Activated CD4-positive, alpha-beta memory T cell treated with anti-CD3 and anti-CD28 coated beads, Interleukin-2, amount 10 ng/mL, durations not matched to agents 7 days and 5 days (primary cell): ENCODE measurements at regions of chr19 and their contacts with region 1.

Region 1: DNA sequence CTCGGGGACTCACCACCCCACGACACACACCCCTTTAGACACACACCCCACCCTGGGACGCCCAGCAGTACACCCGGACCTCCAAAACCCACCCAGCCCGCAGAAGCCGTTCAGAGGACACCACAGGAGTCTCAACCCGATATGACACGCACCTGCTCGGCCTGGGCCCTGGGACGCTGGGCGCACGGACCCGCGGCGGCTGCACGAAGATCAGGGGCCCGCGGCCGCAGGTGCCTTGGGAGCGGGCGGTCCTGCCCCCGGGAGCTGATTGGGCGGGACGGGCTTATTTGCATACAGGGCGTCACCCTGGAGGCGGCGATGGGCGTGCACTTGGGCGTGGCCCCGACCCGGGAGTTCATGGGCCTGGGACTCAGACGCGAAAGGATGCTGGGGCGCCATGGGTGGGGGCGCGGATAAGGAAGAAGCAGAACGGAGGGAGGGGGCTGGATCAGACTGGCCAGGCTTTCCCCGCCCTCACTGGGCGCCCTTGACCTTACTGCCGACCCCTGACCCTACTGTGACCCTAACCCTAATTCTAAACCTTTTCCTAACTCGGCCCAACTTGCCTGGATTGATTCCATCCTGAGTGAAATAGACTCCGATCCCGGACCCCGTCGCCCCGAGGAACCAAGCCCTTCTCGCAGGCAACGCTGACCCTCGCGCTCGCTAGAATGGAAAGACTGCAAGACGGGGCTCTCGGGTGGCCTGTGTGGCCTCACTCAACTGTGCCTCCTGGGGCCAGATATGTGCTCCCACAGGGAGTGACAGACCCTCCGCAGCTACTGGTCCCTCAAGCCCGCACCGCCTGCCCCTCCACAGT is at the start of gene MEF2B:
- DNase-seq: peak; percentile 78
- H3K4me3 Mint-ChIP-seq: no peak within 1 kb of the TSS
- H3K27ac Mint-ChIP-seq: no peak within 1 kb of the TSS
- H3K4me1 Mint-ChIP-seq: peaks cover 13% of the 10 kb centered on the region
- H3K27me3 Mint-ChIP-seq: peaks cover 3% of the 10 kb centered on the region
- total RNA-seq, gene MEF2B: 1.6 to 5.4 TPM

Region 2: GRCh38 chr19:19134687-19135158 is 35.5 kb before region 1 on chr19:
- CTCF ChIA-PET with region 1: no interaction called
- POLR2A ChIA-PET with region 1: no interaction called
- DNase-seq: no peak
- H3K4me3 Mint-ChIP-seq: no peak overlapping the region
- H3K27ac Mint-ChIP-seq: no peak overlapping the region
- H3K4me1 Mint-ChIP-seq: peaks cover 29% of the 10 kb centered on the region
- H3K27me3 Mint-ChIP-seq: no peaks in the 10 kb centered on the region

Region 3: DNA sequence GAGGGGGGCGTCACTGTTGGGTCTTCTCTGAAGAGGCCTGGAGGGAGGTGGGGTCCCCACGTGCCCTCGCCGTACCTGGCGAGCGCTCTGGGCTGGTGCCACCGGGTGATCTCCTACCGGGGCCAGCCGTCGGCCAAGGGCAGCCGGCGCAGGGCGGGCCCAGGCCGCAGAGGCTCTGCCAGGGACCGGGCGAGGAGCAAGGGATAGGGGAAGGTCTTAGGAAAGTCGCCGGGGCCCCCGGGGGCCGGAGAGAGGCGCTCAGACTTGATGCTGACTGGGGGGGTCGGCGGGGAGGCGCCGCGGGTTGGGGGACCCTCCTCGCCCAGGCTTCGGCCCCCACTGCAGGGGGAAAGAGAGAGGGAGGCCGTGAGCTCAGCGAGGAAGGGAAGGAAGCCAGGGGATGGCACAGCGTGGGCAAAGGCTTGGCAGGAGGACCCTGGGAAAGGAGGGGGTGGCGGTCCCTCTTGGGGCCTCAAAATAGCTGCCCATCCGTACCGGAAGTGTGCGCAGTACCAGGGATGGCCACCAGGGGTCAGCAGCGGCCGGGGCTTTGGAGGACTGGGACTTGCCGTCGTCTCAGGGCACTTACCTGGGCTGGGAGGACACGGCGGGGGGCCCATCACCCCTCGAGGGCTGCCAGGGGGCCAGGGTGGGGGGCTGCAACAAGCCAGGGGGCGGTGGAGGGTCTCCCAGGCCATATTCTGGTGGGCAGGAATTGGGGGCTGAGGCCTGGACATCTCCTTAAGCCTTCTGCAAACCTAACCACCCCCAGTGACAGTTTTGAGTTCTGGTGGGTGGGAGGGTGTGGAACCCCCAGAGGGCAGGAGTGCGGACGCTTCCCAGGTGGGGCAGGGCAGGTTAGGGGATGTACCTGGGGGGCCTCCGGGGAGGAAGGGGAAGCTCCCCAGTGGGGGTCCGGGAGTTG is 24.3 kb before region 1 on chr19:
- CTCF ChIA-PET with region 1: interaction called, 11 read pairs
- POLR2A ChIA-PET with region 1: interaction called, 3 read pairs
- DNase-seq: peak; percentile 89
- H3K4me3 Mint-ChIP-seq: no peak overlapping the region
- H3K27ac Mint-ChIP-seq: no peak overlapping the region
- H3K4me1 Mint-ChIP-seq: no peaks in the 10 kb centered on the region
- H3K27me3 Mint-ChIP-seq: no peaks in the 10 kb centered on the region

Region 4: DNA sequence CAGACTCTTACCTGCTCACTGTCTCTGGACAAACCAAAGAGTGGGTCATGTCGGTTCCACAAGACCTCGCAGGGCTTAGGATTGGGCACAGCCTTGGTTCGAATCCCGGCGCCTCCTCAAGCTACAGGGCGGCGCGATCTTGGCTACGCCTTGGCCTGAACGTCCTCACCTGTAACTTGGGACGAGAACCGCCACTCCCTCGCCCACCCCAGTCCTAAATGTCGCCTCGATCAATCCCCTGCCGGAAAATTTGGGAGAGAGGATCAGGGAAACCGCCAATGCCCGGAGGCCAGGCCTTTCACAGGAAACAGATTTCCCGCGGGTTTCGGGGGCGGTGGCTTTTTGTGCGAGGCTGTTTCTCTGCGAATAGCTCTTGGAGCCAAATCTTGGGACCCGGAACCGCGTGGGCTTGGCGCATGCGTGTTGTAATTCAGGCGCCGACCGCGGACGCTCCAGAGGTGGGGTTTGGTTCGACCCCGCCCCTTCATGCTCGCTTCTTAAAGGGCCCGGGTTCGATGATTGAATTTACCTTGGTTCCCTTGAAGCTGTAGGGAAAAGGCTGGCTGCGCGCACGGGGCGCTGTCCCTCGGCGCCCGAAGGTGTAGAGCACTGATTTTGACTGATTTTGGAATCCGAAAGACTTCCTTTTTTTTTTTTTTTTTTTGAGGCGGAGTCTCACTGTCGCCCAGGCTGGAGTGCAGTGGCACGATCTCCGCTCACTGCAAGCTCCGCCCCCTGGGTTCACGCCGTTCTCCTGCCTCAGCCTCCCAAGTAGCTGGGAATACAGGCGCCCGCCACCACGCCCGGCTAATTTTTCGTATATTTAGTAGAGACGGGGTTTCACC is 33.0 kb after region 1 on chr19 and contains the start of gene NR2C2AP:
- CTCF ChIA-PET with region 1: interaction called, 12 read pairs
- POLR2A ChIA-PET with region 1: no interaction called
- DNase-seq: peak; percentile 93
- H3K4me3 Mint-ChIP-seq: peak within 1 kb of the TSS; percentile 90
- H3K27ac Mint-ChIP-seq: peak within 1 kb of the TSS; percentile 86
- H3K4me1 Mint-ChIP-seq: peaks cover 57% of the 10 kb centered on the region
- H3K27me3 Mint-ChIP-seq: peaks cover 1% of the 10 kb centered on the region
- total RNA-seq, gene NR2C2AP: 25.8 to 25.9 TPM